Dendritic cell treated with granulocyte-macrophage colony-stimulating factor and Interleukin-4, amounts not matched to agents 40 ng/mL and 50 ng/mL, for 4 days (primary cell): ENCODE measurements at regions of chr1 and their contacts with region 1.

Region 1: DNA sequence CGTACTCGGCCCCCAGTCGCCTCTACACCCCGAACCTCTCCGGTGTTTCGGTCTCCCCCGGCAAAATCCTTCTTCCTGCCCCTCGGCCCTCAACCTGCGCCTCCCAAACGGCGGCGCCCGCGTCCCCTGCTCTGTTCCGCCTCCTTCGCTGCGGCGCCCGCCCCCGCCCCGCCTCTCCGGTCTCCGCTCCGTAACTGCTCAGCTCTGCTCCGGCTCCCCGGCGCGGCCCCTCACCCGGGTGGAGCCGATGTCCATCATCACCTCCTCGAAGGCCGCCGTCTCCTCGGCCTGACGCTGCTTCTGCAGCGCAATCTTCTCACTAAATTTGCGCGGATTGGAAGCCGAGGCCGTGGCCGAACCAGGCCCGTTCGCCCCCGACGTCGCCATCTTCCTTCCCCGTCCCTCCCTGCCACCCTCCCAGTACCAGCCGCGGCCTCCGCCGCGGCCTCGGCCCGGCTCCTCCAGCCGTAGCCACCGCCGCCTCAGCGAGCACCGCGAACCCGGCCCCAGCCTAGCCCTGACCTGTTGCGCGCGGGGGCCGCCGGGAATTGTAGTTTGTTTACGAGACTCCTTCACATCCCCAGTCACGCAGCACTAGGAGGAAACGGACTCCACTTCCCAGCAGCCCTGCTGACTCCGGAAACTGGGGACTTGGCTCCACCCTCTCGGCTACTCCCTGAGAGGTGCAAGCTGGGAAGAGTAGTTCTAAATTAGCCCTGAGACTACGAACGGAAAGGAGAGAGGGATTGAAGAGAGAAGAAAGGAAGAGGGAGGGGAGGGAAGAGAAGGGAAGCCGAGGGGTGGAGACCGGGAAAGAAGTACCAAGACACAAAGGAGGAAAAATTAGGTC is at the start of gene CRTC2:
- H3K4me3 Mint-ChIP-seq: peak within 1 kb of the TSS; percentile 94
- H3K27ac Mint-ChIP-seq: peak within 1 kb of the TSS; percentile 94
- H3K4me1 Mint-ChIP-seq: peaks cover 79% of the 10 kb centered on the region
- H3K27me3 Mint-ChIP-seq: no peaks in the 10 kb centered on the region

Region 2: DNA sequence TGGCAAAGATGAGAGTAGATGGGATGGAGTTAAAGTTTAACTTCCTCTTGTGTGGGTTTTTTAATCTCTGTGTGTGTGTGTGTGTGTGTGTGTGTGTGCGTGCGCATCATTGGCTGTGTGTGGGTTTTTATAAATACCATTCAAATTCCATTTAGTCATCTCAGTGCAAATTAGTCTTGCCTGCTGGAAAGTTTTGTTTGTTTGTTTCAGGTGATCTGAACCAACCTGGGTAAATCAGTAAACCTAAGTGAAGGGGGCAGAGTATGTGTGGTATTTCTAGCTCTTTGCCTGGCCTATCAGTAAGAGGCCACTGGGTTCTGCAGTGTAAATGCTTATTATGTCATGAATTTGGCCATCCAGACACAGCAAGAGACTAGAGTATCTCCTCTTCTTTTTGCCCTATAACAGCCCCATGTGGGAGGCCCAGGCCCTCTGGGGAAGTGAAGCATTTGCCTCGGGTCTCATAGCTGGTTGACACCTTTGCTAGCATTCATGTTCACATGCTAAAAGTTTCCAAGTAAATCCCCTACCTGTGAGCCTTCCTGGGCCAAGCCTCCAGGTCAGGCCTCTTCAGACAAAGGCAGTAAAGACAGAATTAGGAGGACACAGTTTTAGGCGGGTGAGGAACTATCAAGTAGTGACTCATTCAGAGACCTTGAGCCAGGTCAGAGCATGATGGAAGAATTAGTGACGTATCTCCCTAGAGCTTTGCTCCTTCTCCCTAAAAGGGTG is 215.8 kb before region 1 on chr1:
- intact Hi-C with region 1: no loop called
- H3K4me3 Mint-ChIP-seq: no peak overlapping the region
- H3K27ac Mint-ChIP-seq: peak overlapping the region; percentile 60
- H3K4me1 Mint-ChIP-seq: peaks cover 36% of the 10 kb centered on the region
- H3K27me3 Mint-ChIP-seq: no peaks in the 10 kb centered on the region

Region 3: DNA sequence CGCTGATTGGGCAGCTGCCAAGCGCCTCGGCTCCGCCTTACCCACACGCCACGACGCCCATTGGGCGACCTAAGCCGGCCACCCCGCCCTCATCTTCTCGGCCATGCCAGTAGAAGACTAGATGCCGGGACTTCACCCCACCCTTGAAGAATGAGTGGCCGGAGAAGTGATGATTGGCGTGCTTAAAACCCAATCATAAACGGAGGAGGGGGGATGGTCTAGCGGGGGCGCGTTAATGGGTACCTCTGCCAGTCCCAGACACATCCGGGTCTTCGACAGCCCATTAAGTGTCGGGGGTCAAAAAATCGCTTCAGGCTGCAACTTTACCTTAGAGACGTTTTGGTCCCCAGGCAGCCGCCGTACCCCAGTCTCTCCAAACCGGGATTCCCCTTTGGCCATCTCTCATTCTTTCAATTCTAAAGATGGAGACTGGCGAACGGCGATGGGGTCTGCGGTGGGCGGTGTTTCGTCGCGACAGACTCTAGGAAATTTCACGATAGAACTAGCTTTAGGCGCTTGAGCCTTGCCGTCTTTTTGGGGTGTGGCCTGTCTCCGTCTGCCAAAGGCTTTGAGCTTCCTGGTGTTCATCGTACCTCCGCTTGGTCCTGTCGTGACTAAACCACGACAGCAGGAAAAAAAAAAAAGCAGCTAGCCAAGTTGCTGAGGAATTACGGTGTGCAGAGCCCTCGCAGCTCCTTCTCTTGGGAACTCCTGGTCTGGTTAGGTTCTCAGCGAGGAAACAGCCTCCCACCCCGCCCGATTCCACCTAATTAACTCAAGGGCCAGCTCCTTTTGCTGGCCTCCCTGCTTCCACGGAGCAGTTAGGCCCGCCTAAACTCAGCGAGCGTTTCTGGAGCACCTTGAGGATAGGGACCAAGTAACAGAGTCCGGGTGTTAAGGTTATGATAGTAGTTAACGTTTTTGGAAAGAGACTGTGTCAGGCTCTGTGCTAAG is 35.1 kb before region 1 on chr1 and contains the start of gene GATAD2B:
- intact Hi-C with region 1: loop called (anchors 1 kb)
- H3K4me3 Mint-ChIP-seq: peak within 1 kb of the TSS; percentile 95
- H3K27ac Mint-ChIP-seq: peak within 1 kb of the TSS; percentile 92
- H3K4me1 Mint-ChIP-seq: peaks cover 41% of the 10 kb centered on the region
- H3K27me3 Mint-ChIP-seq: no peaks in the 10 kb centered on the region